Aorta (tissue), 5 donors: ENCODE measurements at regions of chr6 and their contacts with region 1.

Region 1: DNA sequence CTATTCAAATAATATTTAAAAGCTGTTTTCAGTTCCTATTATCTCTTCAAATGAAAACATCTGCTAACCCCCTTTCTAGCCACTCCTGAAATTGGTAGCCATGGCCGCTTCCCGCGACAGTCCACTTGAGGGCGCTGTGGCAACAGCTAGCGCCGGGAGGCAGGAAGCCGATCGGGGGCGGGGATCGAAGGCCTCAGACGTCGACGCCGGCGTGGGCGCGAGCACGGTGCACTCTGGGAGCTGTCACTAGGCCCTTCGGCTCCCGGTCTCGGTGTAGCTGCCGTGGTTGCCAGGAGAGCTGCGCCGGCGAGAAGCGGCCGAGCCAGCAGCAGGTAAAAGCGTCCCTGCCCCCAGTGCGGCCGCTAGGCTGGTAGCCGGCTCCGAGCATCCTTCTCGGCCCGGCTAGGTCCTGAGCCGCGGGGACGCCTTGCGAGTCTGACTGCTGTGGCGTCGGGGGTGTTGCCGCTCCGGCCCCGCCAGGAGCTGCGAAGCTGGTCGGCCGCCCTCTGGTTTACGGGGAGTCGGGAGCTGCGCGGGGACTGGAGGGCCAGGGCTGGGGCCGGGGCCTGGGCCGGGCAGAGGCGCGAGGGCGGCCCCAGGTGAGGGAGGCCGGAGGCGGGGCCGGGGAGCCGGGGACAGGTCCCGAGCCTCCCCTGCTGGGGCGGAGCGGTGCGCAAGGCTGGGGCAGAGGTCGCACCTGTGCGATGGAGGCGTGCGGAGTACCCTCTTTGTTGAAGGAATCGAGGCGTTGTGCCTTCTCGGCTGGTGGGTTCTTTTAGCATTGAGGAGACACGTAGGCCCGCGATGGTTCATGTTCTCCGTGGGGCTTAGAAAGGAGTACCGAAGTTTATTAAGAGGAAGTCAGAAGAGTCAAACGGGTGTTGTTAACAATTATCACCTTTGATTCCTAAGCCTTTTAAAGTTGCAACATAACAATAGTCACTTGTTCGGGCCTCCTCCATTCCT is at the start of gene DOP1A:
- DNase-seq: peak; percentile 98 to 99
- ATAC-seq: peak; percentile 96
- H3K4me3 ChIP-seq: peak within 1 kb of the TSS; percentile 70 to 97
- H3K27ac ChIP-seq: peak within 1 kb of the TSS in 1 of 2 donors; percentile 83
- H3K4me1 ChIP-seq: no peaks in the 10 kb centered on the region
- H3K27me3 ChIP-seq: no peaks in the 10 kb centered on the region
- total RNA-seq, gene DOP1A: 28.2 to 35.1 TPM

Region 2: DNA sequence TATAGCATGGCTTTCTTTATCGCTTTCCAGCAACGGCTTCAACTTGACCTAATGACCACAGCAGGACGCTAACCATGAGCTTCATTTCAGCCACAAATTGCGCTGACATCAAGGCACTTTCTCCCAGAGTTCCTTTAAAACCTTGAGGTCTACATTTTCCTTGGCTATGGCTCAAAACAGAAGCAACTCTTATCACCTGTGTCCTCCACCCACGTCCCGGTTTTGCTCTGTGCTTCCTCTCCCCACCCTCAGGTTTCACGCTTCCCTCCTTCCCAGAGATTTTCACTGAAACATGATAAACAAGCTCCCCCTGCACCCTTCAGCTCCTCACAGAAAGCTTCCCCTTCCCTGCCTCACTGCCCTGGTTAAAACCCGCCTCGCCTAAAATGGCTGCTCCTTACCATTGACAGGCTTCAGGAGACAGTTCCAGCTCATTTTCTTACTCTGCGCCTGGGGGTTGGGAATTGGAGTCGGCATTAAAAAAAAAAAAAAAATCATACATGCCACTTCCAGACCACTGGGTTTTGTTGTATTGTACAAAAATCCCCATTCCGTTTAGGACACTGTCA is 231.6 kb before region 1 on chr6:
- intact Hi-C with region 1: no loop called
- DNase-seq: no peak
- ATAC-seq: no peak
- H3K4me3 ChIP-seq: no peak overlapping the region
- H3K27ac ChIP-seq: no peak overlapping the region
- H3K4me1 ChIP-seq: no peaks in the 10 kb centered on the region
- H3K27me3 ChIP-seq: no peaks in the 10 kb centered on the region

Region 3: GRCh38 chr6:83108378-83108777 is 40.6 kb after region 1 on chr6:
- intact Hi-C with region 1: no loop called
- DNase-seq: no peak
- ATAC-seq: no peak
- H3K4me3 ChIP-seq: no peak overlapping the region
- H3K27ac ChIP-seq: no peak overlapping the region
- H3K4me1 ChIP-seq: no peaks in the 10 kb centered on the region
- H3K27me3 ChIP-seq: no peaks in the 10 kb centered on the region

Region 4: GRCh38 chr6:83119742-83120300 is 52.1 kb after region 1 on chr6:
- intact Hi-C with region 1: loop called in 1 of 2 experiments (anchors 5 kb)
- DNase-seq: no peak
- ATAC-seq: no peak
- H3K4me3 ChIP-seq: no peak overlapping the region
- H3K27ac ChIP-seq: no peak overlapping the region
- H3K4me1 ChIP-seq: no peaks in the 10 kb centered on the region
- H3K27me3 ChIP-seq: no peaks in the 10 kb centered on the region

Region 5: DNA sequence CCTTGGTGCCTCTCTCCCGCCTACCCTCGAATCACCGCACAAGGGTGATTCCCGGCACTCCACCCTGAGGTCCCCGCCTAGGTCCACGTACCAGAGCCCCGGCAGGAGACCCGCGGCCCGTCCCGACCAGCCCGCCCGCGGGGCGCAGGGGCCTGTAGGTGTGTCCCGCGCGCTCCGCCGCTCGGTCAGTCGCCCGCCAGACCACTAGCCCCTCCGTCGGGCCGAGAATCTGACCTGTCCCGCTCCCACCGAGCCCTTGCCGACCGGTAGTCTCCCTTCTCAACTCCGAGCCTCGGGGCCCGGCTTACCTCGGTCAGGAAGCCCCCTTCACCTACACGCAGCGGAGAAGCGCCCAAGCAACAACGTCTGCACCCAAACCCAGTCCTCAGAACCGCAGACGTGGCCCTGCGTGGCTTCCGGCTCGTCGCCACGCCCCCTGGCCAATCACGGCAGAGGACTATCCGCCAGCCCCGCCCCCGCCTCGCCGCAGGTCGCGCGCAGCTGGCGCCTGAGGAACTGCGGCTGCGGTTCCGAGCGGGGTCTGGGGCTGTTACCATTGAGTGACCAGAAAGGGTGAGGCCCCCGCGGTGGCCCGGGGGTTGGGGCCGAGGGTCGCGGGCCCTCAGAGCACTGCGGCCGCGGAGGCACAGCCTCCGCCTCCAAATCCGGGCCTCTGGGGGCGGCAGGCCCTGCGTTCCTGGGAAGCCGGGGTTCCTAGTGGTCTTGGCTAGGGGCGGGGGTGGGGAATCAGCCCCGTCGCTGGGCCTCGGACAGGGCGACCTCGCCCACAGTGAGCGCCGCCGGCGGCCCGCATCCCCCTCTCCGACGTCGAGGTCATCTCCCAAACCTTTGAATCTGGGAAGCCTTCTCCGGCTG is 125.4 kb after region 1 on chr6 and contains the starts of genes PGM3 and RWDD2A:
- intact Hi-C with region 1: loop called in 1 of 2 experiments (anchors 5 kb)
- DNase-seq: peak; percentile 94 to 97
- ATAC-seq: peak; percentile 99
- H3K4me3 ChIP-seq: peak within 1 kb of the TSS; percentile 77 to 93
- H3K27ac ChIP-seq: peak within 1 kb of the TSS in 1 of 2 donors; percentile 64
- H3K4me1 ChIP-seq: no peaks in the 10 kb centered on the region
- H3K27me3 ChIP-seq: no peaks in the 10 kb centered on the region
- total RNA-seq, gene PGM3: 58.3 to 61.0 TPM
- total RNA-seq, gene RWDD2A: 4.7 to 5.0 TPM

Region 6: GRCh38 chr6:83215131-83216047 is 147.7 kb after region 1 on chr6:
- intact Hi-C with region 1: loop called (anchors 1 to 10 kb)
- DNase-seq: peak in 1 of 2 donors; percentile 56
- ATAC-seq: peak; percentile 89
- H3K4me3 ChIP-seq: no peak overlapping the region
- H3K27ac ChIP-seq: peak overlapping the region; percentile 38 to 57
- H3K4me1 ChIP-seq: peaks cover 0 to 3% of the 10 kb centered on the region in 2 donors
- H3K27me3 ChIP-seq: no peaks in the 10 kb centered on the region

Region 7: GRCh38 chr6:83514866-83515466 is 447.2 kb after region 1 on chr6:
- intact Hi-C with region 1: loop called (anchors 2 kb)
- DNase-seq: no peak
- ATAC-seq: no peak
- H3K4me3 ChIP-seq: no peak overlapping the region
- H3K27ac ChIP-seq: no peak overlapping the region
- H3K4me1 ChIP-seq: peaks cover 0 to 2% of the 10 kb centered on the region in 2 donors
- H3K27me3 ChIP-seq: no peaks in the 10 kb centered on the region